Adrenal gland (tissue), 19 donors: ENCODE measurements at regions of chr17 and their contacts with region 1.

Region 1: DNA sequence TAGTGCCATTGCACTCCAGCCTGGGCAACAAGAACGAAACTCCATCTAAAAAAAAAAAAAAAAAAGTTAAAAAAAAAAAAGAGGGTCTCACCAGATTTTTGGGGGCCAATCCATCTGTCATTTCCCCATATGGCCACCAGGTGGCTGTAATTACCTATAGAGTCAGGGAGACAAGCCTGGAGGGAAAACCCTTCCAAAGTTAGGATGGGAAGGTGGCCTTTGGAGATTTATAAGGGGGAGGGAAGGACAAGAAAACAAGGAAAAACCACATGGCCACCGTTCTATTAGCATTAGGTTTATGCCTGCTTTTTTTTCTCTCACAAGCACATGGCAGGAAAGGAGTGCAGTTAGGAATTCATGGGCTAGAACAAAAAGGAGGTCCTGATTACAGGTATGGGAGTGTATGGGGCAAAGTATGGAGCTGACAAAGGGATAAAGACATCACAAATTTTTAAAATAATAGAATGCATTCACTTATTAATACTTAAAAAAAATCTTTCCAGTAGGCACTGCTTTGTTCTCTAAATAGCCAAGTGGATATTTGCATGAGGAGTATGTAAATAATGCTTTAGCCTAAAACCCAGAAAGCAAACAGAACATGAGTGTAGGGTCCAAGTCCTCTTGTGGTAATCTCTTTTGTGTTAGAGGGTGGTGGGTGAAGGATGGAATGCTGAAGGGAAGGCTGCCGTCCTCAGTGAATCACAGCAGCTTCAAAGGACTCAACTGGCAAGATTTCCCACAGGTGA is 5.1 kb downstream of the CYB5D1 start:
- DNase-seq: peak; percentile 45 to 74 (median 49)
- H3K4me3 ChIP-seq: no peak overlapping the region
- H3K27ac ChIP-seq: no peak overlapping the region
- H3K4me1 ChIP-seq: peaks cover 10 to 11% of the 10 kb centered on the region in 2 donors
- H3K27me3 ChIP-seq: no peaks in the 10 kb centered on the region
- CTCF ChIP-seq: peak; percentile 70 to 94 (median 79)
- POLR2A ChIP-seq: no peak

Region 2: DNA sequence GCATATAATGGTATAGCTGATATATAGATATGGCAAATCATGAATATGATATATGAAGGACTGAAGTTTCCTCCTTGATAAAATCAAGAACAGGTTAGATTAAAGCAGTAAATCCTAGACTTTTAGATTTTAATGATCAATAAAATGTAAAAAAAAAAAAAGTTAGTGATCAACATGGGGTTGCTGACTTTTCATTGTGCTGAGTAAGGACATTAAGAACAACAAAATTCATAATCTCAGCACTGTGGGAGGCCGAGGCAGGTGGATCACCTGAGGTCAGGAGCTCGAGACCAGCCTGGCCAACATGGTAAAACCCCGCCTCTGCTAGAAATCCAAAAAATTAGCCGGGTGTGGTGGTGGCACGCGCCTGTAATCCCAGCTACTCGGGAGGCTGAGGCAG is 15.4 kb after region 1 on chr17:
- intact Hi-C with region 1: loop called in 1 of 2 experiments (anchors 2 kb)
- DNase-seq: no peak
- H3K4me3 ChIP-seq: no peak overlapping the region
- H3K27ac ChIP-seq: no peak overlapping the region
- H3K4me1 ChIP-seq: peaks cover 0 to 21% of the 10 kb centered on the region in 2 donors
- H3K27me3 ChIP-seq: no peaks in the 10 kb centered on the region
- CTCF ChIP-seq: no peak
- POLR2A ChIP-seq: no peak

Region 3: GRCh38 chr17:7897773-7898172 is 34.9 kb after region 1 on chr17:
- intact Hi-C with region 1: loop called in 1 of 2 experiments (anchors 5 kb)
- DNase-seq: peak in 6 of 7 donors; percentile 16 to 69 (median 54)
- H3K4me3 ChIP-seq: no peak overlapping the region
- H3K27ac ChIP-seq: peak overlapping the region in 1 of 5 donors; percentile 21
- H3K4me1 ChIP-seq: no peaks in the 10 kb centered on the region
- H3K27me3 ChIP-seq: no peaks in the 10 kb centered on the region
- CTCF ChIP-seq: peak; percentile 37 to 94 (median 76)
- POLR2A ChIP-seq: no peak

Region 4: DNA sequence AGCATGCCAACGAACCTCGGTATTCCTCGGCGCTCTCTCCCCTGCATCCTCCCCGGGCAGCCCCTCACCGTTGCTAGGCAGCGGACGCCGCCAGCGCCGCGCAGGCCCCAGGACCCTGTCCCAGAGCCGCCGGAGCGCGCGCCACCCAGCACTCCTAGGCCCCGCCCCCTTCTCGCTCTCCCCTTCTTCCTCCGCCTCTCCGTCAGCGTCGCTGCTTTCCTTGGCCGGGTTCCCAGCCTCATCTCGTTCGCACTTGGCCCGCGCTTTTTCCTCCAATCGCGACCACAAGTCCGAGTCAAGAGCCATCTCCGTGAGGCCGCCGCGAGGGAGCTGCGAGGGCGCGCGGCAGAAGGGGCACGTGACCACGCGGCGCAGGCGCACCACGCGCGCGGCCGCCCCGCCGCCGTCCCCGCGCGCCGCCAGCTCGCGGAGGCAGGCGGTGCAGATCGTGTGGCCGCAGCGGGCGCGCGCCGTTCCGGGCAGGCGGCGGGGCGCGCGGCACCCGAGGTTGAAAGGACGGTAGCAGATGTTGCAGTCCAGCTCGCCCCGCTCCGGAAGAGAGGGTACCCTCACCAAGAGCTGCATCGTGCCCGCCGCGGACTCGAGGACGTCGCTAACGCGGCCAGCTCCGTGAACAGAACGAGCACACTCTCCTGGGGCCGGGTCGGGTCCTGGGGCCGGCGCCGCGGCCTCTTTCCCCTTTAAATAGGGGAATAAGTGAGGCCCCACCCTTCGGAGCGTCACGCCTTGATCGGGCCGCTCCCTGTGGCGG is 52.9 kb after region 1 on chr17 and contains the start of gene RNF227:
- intact Hi-C with region 1: loop called in 1 of 2 experiments (anchors 10 kb)
- DNase-seq: peak; percentile 89 to 96 (median 92)
- H3K4me3 ChIP-seq: peak within 1 kb of the TSS in 3 of 4 donors; percentile 18 to 55 (median 33)
- H3K27ac ChIP-seq: peak within 1 kb of the TSS in 4 of 5 donors; percentile 81 to 96 (median 88)
- H3K4me1 ChIP-seq: peaks cover 10 to 25% of the 10 kb centered on the region in 2 donors
- H3K27me3 ChIP-seq: no peaks in the 10 kb centered on the region
- CTCF ChIP-seq: peak in 1 of 6 experiments; percentile 9
- POLR2A ChIP-seq: peak; percentile 32 to 37
- total RNA-seq, gene RNF227: 1.1 to 17.3 (median 2.9) TPM